ENCODE measurements at regions of chrX and their contacts with region 1.

Region 1: DNA sequence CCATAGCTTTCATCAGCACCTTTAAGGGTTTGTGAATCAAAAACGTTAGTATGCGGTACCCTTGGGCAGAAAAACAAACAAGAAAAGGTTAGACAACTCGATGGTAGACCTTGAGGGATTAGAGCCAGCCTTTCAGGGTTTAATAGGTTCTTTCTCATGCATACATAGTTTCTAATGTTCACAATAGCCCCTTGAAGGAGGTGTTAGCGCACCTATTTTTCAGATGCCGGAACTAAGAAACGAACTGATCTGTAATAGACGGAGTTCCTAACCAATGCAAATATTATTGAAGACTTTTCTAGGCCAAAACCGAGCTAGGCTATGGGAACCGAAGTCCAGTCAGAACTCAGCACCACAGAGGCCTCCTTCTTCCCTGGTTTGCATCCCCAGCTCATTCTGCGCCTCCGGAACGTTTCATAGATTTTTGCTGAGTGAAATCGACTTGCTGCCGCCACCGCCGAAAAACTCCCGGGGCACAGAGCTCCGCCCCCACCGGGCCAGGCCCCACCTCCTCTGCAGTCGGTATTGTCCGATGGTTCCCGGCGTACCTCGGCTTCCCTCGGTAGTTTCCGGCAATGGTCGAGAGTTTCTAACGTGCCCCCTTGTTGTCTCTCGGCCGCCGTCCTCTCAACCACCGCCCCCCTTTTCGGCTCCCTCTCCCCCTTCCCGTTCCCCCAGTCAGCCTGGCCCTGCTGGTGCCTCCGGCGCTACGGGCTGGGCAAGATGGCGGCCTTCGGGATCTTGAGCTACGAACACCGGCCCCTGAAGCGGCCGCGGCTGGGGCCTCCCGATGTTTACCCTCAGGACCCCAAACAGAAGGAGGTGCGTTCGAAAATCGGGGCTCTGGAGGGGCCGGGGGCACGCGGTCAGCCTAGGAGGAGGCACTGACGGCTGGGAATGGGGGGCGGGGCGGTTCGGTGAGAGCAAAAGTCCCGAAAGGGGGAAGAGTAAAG is at the start of gene MED12:
- DNase-seq: peak; percentile 80

Region 2: DNA sequence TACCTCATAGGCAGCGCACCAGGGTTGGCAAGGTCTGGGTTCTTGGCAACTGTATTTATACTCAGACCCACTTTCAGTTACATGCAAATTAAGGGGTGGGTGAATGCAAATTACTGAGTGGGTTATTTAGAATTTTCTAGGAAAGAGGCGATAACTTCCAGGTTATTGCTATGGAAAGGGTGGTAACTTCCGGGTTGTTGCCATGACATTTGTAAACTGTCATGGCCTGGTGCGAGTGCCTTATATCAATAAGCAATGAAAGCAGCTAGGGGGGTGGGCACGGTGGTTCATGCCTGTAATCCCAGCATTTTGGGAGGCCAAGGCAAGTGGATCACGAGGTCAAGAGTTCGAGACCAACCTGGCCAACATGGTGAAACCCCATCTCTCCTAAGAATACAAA is 129.9 kb before region 1 on chrX:
- CTCF ChIA-PET with region 1: no interaction called
- POLR2A ChIA-PET with region 1: no interaction called
- DNase-seq: no peak

Region 3: DNA sequence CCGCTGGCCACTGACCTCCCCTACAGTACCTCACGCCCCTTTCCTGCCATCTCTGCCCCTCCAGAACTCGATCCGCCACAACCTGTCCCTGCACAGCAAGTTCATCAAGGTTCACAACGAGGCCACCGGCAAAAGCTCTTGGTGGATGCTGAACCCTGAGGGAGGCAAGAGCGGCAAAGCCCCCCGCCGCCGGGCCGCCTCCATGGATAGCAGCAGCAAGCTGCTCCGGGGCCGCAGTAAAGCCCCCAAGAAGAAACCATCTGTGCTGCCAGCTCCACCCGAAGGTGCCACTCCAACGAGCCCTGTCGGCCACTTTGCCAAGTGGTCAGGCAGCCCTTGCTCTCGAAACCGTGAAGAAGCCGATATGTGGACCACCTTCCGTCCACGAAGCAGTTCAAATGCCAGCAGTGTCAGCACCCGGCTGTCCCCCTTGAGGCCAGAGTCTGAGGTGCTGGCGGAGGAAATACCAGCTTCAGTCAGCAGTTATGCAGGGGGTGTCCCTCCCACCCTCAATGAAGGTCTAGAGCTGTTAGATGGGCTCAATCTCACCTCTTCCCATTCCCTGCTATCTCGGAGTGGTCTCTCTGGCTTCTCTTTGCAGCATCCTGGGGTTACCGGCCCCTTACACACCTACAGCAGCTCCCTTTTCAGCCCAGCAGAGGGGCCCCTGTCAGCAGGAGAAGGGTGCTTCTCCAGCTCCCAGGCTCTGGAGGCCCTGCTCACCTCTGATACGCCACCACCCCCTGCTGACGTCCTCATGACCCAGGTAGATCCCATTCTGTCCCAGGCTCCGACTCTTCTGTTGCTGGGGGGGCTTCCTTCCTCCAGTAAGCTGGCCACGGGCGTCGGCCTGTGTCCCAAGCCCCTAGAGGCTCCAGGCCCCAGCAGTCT is 17.4 kb before region 1 on chrX:
- CTCF ChIA-PET with region 1: interaction called, 3 read pairs
- POLR2A ChIA-PET with region 1: interaction called, 24 read pairs
- DNase-seq: no peak

Region 4: GRCh38 chrX:71128915-71129765 is 10.8 kb after region 1 on chrX:
- CTCF ChIA-PET with region 1: interaction called, 11 read pairs
- POLR2A ChIA-PET with region 1: interaction called, 9 read pairs
- DNase-seq: peak; percentile 83

Region 5: DNA sequence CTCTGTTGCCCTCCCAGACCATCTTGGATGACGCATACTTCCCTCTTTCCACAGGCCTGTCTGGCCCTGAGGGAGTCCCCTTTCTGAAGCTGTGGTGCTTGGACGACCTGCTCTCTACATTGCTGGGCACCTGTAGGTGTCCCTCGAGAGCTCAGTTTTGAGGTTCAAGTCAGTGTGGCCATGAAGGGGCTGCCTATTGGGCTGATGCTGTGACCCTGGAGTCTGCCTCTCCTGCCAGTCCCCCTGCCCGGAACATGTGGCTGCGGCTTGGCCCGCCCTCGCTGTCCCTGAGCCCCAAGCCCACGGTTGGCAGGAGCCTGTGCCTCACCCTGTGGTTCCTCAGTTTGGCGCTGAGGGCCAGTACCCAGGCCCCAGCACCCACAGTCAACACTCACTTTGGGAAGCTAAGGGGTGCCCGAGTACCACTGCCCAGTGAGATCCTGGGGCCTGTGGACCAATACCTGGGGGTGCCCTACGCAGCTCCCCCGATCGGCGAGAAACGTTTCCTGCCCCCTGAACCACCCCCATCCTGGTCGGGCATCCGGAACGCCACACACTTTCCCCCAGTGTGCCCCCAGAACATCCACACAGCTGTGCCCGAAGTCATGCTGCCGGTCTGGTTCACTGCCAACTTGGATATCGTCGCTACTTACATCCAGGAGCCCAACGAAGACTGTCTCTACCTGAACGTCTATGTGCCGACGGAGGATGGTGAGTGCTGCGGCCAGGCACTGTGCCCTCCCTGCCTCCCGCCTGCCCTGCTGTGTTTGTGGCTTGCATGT is 29.4 kb after region 1 on chrX:
- CTCF ChIA-PET with region 1: no interaction called
- POLR2A ChIA-PET with region 1: no interaction called
- DNase-seq: no peak

Region 6: DNA sequence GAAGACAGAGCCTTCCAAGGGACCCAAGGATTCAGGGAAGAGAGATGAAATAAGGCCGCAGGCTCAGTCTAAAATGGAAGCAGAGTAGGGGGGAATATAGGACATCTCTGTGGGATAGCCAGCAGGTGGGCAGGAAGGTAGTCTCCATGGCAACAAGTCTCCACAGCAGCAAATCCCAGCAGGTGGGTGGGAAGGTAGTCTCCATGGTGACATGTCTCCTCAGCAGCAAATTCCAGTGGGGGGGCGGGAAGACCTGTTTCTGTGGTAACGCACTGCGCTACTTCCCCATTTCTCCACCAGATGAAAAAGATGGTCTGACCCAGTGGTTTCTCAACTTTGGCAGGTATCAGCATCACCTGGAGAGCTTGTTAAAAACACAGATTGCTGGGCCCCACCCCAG is 44.7 kb after region 1 on chrX:
- CTCF ChIA-PET with region 1: no interaction called
- POLR2A ChIA-PET with region 1: no interaction called
- DNase-seq: no peak

Region 7: GRCh38 chrX:71482228-71482958 is 364.1 kb after region 1 on chrX:
- CTCF ChIA-PET with region 1: no interaction called
- POLR2A ChIA-PET with region 1: no interaction called
- DNase-seq: no peak